ENCODE measurements at regions of chr11 and their contacts with region 1.

Region 1: GRCh38 chr11:128488471-128488870 is 98.9 kb downstream of the ETS1 start:
- DNase-seq: no peak
- H3K4me3 Mint-ChIP-seq: peak overlapping the region; percentile 42
- H3K27ac Mint-ChIP-seq: peak overlapping the region; percentile 68
- H3K4me1 Mint-ChIP-seq: peaks cover 91% of the 10 kb centered on the region
- H3K27me3 Mint-ChIP-seq: no peaks in the 10 kb centered on the region

Region 2: GRCh38 chr11:128172046-128172878 is 316.2 kb before region 1 on chr11:
- intact Hi-C with region 1: loop called (anchors 5 kb)
- DNase-seq: peak; percentile 72
- H3K4me3 Mint-ChIP-seq: no peak overlapping the region
- H3K27ac Mint-ChIP-seq: peak overlapping the region; percentile 54
- H3K4me1 Mint-ChIP-seq: peaks cover 35% of the 10 kb centered on the region
- H3K27me3 Mint-ChIP-seq: peaks cover 6% of the 10 kb centered on the region

Region 3: GRCh38 chr11:128448200-128448886 is 40.1 kb before region 1 on chr11:
- intact Hi-C with region 1: no loop called
- DNase-seq: no peak
- H3K4me3 Mint-ChIP-seq: no peak overlapping the region
- H3K27ac Mint-ChIP-seq: no peak overlapping the region
- H3K4me1 Mint-ChIP-seq: peaks cover 40% of the 10 kb centered on the region
- H3K27me3 Mint-ChIP-seq: no peaks in the 10 kb centered on the region

Region 4: DNA sequence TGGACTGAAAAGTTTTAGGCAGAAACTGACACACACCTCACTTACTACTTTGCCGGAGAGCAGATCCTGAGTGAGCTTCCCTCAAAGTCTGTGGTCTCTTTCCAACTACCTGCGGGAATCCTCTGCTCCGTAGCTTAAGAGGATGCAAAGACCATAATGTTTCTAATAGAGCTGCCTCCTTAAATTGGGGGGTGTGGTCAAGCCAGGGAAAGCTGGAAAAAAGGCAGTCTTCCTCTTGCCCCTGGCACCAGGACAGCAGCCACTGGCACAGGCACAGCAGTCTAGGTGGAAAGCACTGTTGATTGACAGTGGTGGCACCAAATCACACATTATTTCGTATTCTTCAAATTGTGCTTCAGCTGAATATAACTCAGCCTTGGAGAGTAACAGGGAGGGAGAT is 99.0 kb after region 1 on chr11 and contains the start of gene ETS1:
- intact Hi-C with region 1: no loop called
- DNase-seq: no peak
- H3K4me3 Mint-ChIP-seq: no peak within 1 kb of the TSS
- H3K27ac Mint-ChIP-seq: no peak within 1 kb of the TSS
- H3K4me1 Mint-ChIP-seq: peaks cover 7% of the 10 kb centered on the region
- H3K27me3 Mint-ChIP-seq: peaks cover 39% of the 10 kb centered on the region
- total RNA-seq, gene ETS1: 517 and 526 TPM in 2 replicates